ENCODE measurements at regions of chr2 and their contacts with region 1.

Region 1: DNA sequence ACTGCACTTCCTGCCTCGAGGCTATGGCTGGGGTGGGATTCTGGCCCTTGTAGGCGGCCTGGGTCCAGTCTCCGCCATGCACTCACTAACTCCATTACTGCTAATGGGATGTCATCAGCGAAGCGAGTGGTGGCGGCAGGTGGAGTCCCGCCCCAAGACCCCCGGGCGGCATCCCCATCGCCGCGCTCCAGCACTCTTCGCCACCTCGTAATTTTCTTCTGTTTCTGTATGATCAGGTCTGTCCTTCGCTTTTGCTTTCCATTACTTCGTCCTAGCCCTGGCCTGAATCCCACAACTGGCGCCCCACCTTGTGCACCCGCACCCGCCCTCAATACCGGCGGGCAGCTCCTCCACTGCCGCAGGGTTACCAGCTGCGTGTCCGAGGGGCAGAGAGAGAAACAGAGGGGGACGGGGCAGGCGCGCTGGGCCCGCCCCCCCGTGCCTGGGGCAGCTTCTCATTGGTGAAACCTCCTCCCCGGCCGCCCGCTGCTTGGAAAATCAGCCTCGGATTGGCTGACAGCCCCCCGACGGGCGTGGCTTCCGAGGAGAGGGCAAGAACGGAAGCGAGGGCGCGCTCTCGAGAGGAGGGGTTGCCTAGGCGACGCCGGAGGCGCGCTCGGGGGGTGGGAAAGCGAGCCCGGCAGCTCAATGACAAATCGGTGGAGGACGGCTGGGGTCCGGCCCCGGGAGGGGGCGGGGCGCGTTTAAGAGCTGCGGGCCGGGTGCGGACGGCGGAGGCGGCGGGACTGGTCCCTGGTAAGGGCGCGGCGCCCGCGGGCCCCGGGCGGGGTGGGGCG is at the start of gene RALB:
- DNase-seq: peak; percentile 100
- ATAC-seq: peak; percentile 96
- total RNA-seq, gene RALB: 52.0 TPM

Region 2: GRCh38 chr2:120204022-120204405 is 48.4 kb before region 1 on chr2:
- intact Hi-C with region 1: no loop called
- DNase-seq: no peak
- ATAC-seq: peak; percentile 10

Region 3: DNA sequence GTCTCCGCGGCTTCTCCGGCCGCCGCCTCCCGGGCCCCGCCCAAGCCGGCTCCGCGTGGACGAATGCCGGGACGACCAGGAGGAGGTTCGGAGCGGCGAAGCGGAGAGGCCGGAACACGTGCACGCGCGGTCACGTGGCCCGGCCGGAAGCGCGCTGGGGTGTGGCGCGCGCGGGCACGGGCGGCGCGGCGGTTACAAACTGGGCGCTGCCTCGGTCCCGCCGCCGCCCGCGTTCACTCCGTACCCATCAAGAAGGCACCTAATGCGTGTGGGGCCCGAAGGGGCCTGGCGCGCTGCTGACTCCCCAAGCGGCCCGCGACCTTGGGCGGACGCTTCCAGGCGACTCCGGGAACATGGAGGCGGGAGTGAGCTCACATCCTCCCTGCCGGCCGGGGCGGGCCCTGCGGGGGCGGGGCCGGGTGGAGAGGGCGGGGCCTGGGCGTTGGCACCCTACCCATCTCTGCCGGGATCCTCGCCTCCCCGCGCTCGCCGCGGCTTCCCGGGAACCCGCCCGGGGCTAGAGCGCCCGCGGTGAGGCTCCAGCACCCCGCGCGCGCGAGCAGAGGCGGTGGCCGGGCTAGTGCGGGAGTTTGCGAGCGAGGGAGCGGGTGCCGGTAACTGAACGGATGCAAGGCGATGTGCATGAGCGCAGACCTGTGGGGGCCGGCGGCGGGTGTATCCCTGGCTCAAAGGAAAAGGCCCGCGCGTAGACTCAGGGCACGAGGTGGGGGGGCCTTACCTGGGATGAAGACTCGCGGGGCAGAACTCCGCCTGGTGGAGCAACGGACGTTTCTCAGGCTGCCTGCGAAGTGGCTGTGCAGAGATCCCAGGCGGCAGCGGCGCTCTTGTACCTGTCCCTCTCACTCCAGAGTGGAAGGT is 29.1 kb before region 1 on chr2 and contains the start of gene TMEM185B:
- intact Hi-C with region 1: loop called (anchors 1 kb)
- DNase-seq: peak; percentile 94
- ATAC-seq: peak; percentile 97
- total RNA-seq, gene TMEM185B: 20.6 TPM

Region 4: GRCh38 chr2:120307482-120307881 is 55.1 kb after region 1 on chr2:
- intact Hi-C with region 1: no loop called
- DNase-seq: no peak
- ATAC-seq: no peak